ENCODE measurements at regions of chr3 and their contacts with region 1.

Region 1: DNA sequence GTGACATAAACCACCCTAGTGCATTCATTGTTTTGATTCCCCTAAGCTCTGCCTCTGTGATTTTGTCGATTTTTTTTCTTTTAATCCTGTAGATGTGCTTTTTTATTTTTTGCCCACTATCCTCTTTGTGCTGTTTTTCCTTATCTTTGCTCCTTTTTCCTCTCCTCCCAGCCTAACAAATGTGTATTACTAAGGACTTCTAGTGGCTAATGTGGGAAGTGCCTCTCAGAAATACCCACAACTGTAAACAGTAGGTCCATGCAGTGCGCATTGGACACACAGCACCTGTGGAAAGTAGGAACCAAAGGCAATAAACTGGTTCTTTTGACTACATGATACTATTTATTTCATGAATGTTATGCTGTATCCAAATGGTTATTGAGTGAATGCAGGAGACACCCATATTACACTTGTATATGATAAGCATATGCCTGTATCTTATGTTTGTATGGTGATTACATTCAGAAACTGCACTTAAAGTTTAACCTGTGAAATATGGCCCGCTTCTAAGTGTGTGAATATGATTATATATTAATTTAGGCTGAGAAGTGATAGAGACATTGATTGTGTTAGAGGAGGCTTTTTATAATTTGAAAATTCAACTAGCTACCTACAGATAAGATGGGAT is 147.8 kb downstream of the PLCL2 start:
- DNase-seq: peak in 1 of 2 donors; percentile 25
- ATAC-seq: no peak
- H3K4me3 ChIP-seq: no peak overlapping the region
- H3K4me3 Mint-ChIP-seq: peak overlapping the region; percentile 47
- H3K27ac ChIP-seq: no peak overlapping the region
- H3K27ac Mint-ChIP-seq: peak overlapping the region; percentile 67 to 76
- H3K4me1 ChIP-seq: peaks cover 23% of the 10 kb centered on the region
- H3K4me1 Mint-ChIP-seq: peaks cover 68 to 76% of the 10 kb centered on the region in 2 donors
- H3K27me3 ChIP-seq: no peaks in the 10 kb centered on the region
- H3K27me3 Mint-ChIP-seq: no peaks in the 10 kb centered on the region
- CTCF ChIP-seq: peak; percentile 23

Region 2: DNA sequence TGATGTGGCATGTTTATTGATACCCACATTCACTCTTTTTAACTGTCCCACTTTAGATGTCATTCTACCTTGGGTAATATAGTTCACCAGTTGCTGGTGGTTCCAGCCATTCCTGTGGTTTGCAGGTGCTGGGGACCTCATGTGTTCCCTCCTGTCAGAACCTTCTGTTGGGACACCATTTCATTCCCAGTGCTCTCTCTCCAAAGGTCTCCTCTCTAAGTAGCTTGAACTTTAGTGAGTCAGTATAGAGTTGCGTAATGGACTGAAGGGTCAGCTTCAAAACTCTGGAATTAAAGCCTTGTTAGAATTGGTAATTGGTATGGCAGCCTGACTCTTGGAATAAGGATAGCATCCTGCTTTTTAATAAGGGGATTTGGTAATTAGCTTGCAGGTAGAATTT is 39.3 kb before region 1 on chr3:
- intact Hi-C with region 1: loop called (anchors 5 kb)
- DNase-seq: no peak
- ATAC-seq: no peak
- H3K4me3 ChIP-seq: no peak overlapping the region
- H3K4me3 Mint-ChIP-seq: no peak overlapping the region
- H3K27ac ChIP-seq: no peak overlapping the region
- H3K27ac Mint-ChIP-seq: peak overlapping the region; percentile 73 to 77
- H3K4me1 ChIP-seq: peaks cover 48% of the 10 kb centered on the region
- H3K4me1 Mint-ChIP-seq: peaks cover 88 to 95% of the 10 kb centered on the region in 2 donors
- H3K27me3 ChIP-seq: no peaks in the 10 kb centered on the region
- H3K27me3 Mint-ChIP-seq: no peaks in the 10 kb centered on the region
- CTCF ChIP-seq: no peak

Region 3: GRCh38 chr3:17074559-17074958 is 42.0 kb after region 1 on chr3:
- intact Hi-C with region 1: loop called (anchors 2 kb)
- DNase-seq: peak in 1 of 2 donors; percentile 57
- ATAC-seq: peak; percentile 20 to 44 (median 40)
- H3K4me3 ChIP-seq: no peak overlapping the region
- H3K4me3 Mint-ChIP-seq: peak overlapping the region; percentile 75
- H3K27ac ChIP-seq: peak overlapping the region; percentile 43
- H3K27ac Mint-ChIP-seq: peak overlapping the region; percentile 79 to 84
- H3K4me1 ChIP-seq: peaks cover 41% of the 10 kb centered on the region
- H3K4me1 Mint-ChIP-seq: peaks cover 62 to 69% of the 10 kb centered on the region in 2 donors
- H3K27me3 ChIP-seq: no peaks in the 10 kb centered on the region
- H3K27me3 Mint-ChIP-seq: no peaks in the 10 kb centered on the region
- CTCF ChIP-seq: no peak